GM10248 (cell line): ENCODE measurements at regions of chr3 and their contacts with region 1.

Region 1: DNA sequence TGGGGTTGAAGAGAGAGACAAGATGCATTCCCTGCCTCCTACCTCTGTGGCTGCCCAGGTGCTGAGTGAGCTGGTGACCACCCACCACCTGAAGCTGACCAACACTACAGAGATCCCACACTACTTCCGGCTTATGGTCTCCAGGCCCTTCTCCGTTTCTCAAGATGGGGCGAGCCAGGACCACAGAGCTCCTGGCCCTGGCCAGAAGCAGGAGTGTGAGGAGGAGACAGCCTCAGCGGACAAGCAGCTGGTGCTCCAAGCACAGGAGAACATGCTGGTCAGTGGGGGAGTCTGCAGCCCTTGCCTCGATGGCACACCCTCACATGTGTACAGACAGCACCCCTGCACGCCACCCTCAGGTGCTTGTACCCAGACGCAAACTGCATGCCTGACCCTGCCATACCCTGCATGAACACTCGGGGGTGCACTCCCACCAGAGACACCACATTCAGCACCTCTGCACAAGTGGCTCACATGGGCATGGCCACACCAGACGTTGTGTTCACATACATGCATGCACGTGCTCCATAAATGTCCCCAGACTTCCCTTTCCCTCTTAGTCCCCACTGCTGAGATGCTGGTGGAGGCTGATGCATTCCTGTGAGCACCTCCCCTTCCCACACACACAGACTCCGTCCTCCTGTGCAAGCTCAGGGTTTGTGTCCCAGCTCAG is 19.0 kb downstream of the ACAA1 start:
- DNase-seq: peak; percentile 79
- CTCF ChIP-seq: peak; percentile 86

Region 2: GRCh38 chr3:38101811-38102443 is 16.0 kb before region 1 on chr3:
- CTCF ChIA-PET with region 1: interaction called, 13 read pairs
- POLR2A ChIA-PET with region 1: no interaction called
- DNase-seq: no peak
- CTCF ChIP-seq: no peak

Region 3: GRCh38 chr3:38131621-38132369 is 13.9 kb after region 1 on chr3:
- CTCF ChIA-PET with region 1: interaction called, 71 read pairs
- POLR2A ChIA-PET with region 1: interaction called, 5 read pairs
- DNase-seq: no peak
- CTCF ChIP-seq: peak; percentile 43

Region 4: DNA sequence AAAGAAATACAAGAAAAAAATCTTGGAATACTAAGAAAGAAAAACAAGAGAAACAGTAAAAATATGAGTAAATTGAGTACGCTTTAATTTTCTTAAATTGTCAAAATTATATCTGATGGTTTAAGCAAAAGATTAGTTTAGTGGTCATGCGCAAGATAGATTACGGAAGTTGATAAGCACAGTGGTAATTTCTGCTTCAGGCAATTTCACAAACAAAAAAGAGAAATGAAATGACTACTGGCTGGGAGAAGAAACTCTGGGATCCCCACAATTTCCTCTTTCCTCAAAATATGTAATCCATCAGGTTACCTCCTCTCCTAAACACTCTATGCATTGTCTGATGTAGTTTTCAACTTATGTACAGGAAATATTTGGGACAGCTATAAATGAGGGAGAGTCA is 29.5 kb after region 1 on chr3:
- CTCF ChIA-PET with region 1: no interaction called
- POLR2A ChIA-PET with region 1: no interaction called
- DNase-seq: no peak
- CTCF ChIP-seq: no peak

Region 5: GRCh38 chr3:38297947-38298711 is 180.2 kb after region 1 on chr3:
- CTCF ChIA-PET with region 1: interaction called, 40 read pairs
- POLR2A ChIA-PET with region 1: no interaction called
- DNase-seq: peak; percentile 20
- CTCF ChIP-seq: peak; percentile 38

Region 6: DNA sequence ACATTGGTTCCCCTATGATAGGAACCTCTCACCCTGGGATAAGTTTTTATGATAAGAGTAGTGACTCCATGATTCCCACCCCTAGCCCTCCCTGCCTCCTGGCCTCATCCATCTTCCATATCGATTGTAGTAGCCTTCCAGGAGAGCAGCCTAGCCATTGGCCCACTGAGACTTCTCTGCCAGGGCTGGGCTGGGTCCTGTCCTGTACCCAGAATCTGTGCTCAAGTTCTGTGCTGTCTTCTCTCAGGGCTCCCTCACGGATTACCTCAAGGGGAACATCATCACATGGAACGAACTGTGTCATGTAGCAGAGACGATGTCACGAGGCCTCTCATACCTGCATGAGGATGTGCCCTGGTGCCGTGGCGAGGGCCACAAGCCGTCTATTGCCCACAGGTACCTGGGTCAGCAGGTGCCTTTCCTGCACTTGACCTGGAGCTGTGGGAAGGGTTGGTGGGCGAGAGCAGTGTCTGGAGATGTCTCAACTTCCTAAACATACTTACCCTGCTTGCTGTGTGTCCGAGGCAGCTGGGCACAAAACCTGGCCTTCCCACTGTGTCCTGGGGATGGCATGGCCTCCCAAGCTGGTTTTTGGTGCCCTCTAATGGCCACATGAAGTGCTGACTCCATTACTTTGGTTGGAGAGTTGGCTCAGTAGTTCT is 361.7 kb after region 1 on chr3:
- CTCF ChIA-PET with region 1: interaction called, 33 read pairs
- POLR2A ChIA-PET with region 1: no interaction called
- DNase-seq: peak; percentile 79
- CTCF ChIP-seq: peak; percentile 91